Activated B cell treated with CpG ODN at 0.5 μM for 24 hours (primary cell): ENCODE measurements at regions of chr2 and their contacts with region 1.

Region 1: DNA sequence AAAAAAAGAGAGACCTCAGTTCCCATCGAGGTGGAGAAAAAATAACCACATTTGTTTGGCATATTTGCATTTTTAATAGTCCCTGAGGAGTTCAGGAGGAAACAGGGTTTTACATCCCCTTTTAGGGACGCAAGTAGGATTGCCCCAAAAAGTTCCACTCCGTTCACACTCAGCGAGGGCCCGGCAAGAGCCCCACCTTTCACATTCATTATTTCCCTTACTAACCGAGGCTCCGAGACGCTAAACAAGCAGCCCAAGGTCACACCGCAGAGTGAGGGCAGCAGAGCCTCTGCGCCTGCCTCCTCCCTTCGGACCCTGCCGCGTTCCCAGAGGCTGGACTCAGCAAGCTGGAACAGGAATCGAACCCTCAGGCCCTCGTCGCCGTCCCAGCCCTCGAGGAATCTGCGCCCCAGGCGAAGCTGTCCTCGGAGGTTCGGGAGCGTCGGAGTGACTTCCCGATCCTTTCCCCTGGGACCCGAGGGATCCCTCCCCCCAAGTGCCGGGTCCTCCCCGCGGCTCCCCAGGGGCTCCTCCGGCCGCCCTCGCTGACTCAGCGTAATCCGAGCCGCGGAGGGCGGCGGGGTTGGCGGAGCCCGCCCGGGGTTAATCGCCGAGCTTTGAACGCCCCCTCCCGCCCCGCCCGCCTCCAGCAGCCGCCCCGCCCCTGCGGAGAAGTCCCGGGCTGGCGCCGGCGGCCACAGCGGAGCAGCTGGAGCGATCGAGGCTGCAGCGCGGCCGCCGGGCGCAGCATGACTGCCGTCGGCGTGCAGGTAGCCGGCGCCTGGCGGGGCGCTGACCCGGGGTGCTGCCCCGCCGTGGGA is at the start of gene TMEM37:
- DNase-seq: peak; percentile 55
- ATAC-seq: peak; percentile 79
- H3K4me3 Mint-ChIP-seq: peak within 1 kb of the TSS; percentile 77
- H3K27ac Mint-ChIP-seq: peak within 1 kb of the TSS; percentile 42
- H3K4me1 Mint-ChIP-seq: peaks cover 19% of the 10 kb centered on the region
- H3K27me3 Mint-ChIP-seq: peaks cover 47% of the 10 kb centered on the region
- CTCF ChIP-seq: no peak
- total RNA-seq, gene TMEM37: 0.37 and 0.51 TPM in 2 replicates

Region 2: DNA sequence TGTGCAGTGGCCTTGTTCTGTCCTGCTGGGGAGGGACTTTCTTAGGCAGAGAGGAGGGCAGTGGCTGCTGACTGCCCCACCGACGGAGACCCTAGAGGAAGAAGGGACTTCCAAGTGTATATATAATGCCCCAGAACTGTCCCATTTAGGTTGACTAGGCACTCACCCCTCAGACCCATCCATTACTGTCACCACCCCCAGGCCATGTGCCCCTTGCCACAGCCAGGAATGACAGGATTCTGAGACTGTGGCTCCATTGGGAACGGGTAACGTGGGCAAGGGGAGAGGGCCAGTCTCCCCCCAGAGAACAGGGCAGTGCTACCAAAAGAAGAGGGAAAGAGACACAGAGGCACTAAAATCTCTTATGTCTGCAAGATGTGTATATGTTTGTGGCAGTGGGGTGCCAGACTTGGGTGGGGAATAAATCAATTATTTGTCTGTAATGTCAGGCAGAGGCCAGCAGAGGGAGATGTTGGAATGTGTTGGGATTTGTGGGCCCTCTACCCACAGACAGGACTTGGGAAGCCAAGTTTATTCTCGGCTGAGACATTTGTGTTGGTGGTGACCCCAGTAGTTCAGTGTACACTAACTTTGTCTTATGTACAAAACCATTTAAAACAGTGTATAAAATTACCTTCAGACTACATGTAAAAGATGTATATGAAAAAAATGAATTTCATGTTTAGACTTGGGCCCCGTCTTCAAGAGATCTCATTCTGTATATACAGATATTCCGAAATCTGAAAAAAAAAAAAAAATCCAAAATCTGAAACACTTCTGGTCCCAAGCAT is 23.7 kb before region 1 on chr2:
- CTCF ChIA-PET with region 1: interaction called, 3 read pairs
- POLR2A ChIA-PET with region 1: no interaction called
- intact Hi-C with region 1: loop called (anchors 1 kb)
- DNase-seq: no peak
- ATAC-seq: peak; percentile 47
- H3K4me3 Mint-ChIP-seq: no peak overlapping the region
- H3K27ac Mint-ChIP-seq: no peak overlapping the region
- H3K4me1 Mint-ChIP-seq: no peaks in the 10 kb centered on the region
- H3K27me3 Mint-ChIP-seq: peaks cover 13% of the 10 kb centered on the region
- CTCF ChIP-seq: peak; percentile 68

Region 3: DNA sequence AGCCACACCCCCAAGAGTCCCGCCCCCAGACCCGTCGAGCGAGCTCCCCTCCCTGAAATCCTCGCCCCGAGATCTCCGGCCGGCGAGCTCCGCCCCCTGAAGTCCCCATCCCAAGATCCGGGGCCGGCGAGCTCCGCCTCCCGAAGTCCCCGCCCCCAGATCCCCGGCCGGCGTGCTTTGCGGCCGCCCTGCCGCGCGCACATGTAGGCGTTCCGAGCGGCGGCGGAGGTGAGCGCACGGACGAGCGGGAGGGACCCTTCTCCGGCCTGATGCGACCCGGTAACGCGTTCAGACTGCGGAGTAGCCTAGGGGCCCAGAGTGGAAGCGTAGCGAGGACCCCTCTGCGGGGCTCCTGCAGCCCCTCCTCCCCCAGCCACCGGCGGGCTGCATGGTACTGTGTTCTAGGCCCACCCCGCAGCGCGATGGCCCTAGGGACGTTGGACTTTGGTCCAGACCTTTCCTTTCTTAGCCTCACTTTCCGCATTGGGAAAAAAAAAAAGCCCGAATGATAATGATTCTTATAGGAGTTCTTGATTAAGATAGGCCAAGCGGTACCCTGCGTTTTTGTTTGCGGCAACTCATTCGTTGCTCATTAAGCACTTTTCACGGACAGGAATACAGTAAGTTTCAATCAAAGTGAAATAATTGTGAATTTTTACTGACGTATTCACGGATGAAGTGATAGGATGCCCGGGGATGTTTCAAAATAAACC is 247.8 kb after region 1 on chr2 and contains the start of gene TMEM177:
- CTCF ChIA-PET with region 1: no interaction called
- POLR2A ChIA-PET with region 1: no interaction called
- intact Hi-C with region 1: loop called (anchors 5 kb)
- DNase-seq: peak; percentile 90
- ATAC-seq: peak; percentile 96
- H3K4me3 Mint-ChIP-seq: peak within 1 kb of the TSS; percentile 90
- H3K27ac Mint-ChIP-seq: peak within 1 kb of the TSS; percentile 68
- H3K4me1 Mint-ChIP-seq: peaks cover 23% of the 10 kb centered on the region
- H3K27me3 Mint-ChIP-seq: no peaks in the 10 kb centered on the region
- CTCF ChIP-seq: no peak
- total RNA-seq, gene TMEM177: 9.0 and 10.3 TPM in 2 replicates

Region 4: DNA sequence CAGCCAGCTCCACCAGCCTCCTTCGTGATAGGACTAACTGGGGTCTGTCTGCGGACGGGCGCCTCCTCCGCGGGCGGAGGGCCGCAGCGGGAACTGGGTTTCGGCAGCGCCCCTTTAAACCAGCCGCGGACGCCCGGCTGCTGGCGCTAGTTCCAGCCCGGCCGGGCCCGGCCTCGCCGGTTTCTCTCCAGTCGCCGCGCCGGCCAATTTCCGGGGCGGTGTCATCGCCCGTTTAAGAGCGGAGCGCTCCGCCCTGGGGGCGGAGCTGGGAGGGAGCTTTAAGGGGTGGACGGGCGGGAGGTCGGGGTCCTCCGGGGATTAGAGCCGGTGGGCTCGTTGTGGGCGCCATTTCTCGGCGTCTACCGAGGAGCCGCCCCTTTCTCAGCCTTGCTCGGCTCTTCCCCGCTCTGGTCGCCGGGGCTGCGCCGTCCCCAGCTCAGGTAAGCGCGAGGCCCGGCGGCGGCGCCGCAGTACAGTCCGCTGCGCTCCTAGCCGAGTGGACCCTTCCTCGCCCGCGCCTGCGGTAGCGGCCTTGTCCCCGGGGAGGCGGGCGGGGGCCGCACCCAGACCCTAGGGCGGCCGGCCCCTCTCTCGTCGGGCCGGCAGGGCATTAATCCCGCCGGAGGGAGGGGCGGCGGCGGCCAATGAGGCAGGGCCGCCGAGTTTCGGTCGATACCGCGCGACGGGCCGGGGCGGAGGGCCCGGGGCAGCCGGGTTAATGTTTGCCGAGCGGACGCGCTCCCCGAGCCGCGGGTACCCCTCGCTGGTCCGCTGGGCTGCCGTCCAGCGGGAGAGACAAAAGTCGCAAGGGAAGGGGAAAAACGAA is 581.6 kb after region 1 on chr2 and contains the start of gene EPB41L5:
- CTCF ChIA-PET with region 1: no interaction called
- POLR2A ChIA-PET with region 1: no interaction called
- intact Hi-C with region 1: loop called (anchors 5 kb)
- DNase-seq: peak; percentile 77
- ATAC-seq: peak; percentile 87
- H3K4me3 Mint-ChIP-seq: peak within 1 kb of the TSS; percentile 87
- H3K27ac Mint-ChIP-seq: peak within 1 kb of the TSS; percentile 79
- H3K4me1 Mint-ChIP-seq: peaks cover 32% of the 10 kb centered on the region
- H3K27me3 Mint-ChIP-seq: no peaks in the 10 kb centered on the region
- CTCF ChIP-seq: no peak
- total RNA-seq, gene EPB41L5: 20.9 and 29.4 TPM in 2 replicates